ENCODE measurements at regions of chr3 and their contacts with region 1.

Region 1: DNA sequence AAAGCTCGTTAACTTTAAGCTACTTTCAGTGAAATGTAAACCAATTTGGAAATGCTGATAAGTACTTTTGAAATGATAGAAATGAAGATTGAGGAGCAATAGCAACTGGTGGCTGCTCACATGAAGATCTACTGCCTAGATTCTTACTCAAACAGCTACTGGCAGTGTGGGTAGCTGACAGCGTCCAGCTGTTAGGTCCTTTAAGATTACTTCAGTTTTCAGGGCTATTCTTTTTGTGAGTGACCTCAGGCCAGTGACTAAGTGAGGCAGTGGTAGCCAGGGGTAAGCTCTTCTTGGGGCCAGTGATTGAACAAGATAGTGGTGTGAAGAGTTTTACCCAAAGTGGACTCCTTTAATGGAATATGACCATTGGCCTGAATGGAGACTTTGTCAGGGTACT is 41.3 kb downstream of the NECTIN3 start:
- DNase-seq: no peak
- ATAC-seq: no peak
- H3K4me3 ChIP-seq: no peak overlapping the region
- H3K27ac ChIP-seq: no peak overlapping the region
- H3K4me1 ChIP-seq: no peaks in the 10 kb centered on the region
- H3K27me3 ChIP-seq: no peaks in the 10 kb centered on the region
- CTCF ChIP-seq: no peak
- EP300 ChIP-seq: no peak
- POLR2A ChIP-seq: no peak
- RAD21 ChIP-seq: no peak

Region 2: DNA sequence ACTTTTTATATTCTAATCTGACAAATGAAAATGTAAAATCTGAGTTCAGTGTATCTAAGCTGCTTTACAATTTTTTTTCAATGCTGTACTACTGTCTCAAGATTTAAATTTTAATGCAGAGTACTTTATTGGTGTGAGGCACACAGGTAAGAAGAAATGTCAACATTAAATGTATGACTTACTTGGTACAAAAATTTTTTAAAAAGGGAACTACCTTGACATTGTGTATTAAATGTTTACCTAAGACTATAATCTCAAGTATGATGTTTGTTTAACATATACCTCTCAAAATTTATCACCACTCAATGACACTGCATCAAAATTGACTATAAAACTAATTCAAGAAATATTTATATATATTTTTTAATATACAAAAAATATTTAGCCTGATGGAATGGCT is 21.4 kb after region 1 on chr3:
- CTCF ChIA-PET with region 1: no interaction called
- POLR2A ChIA-PET with region 1: no interaction called
- in situ Hi-C with region 1: no loop called
- intact Hi-C with region 1: loop called (anchors 1 kb)
- DNase-seq: no peak
- ATAC-seq: no peak
- H3K4me3 ChIP-seq: no peak overlapping the region
- H3K27ac ChIP-seq: no peak overlapping the region
- H3K4me1 ChIP-seq: no peaks in the 10 kb centered on the region
- H3K27me3 ChIP-seq: no peaks in the 10 kb centered on the region
- CTCF ChIP-seq: no peak
- EP300 ChIP-seq: no peak
- POLR2A ChIP-seq: no peak
- RAD21 ChIP-seq: no peak

Measured in HepG2 (cell line).